PC-9 (cell line): ENCODE measurements at regions of chr4 and their contacts with region 1.

Region 1: DNA sequence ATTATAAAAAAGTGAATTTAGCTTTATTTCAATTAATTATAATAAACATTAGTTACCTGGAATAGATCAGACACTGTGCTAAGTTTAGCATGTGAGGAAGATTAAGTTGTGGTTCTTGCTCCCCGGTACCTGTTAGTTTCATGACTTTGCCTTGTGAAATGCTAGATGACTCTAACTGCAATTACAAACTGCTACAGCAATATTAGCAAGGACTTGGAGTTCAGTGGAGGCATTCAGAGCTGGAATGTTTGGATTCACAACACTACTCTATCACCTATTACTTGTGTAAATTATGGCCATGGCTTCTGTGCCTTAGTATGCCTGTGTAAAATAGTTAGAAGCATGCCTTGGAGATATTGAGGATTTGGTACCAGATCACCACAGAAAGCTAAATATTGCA is 21.4 kb upstream of the ANXA10 start:
- DNase-seq: no peak
- H3K4me3 ChIP-seq: no peak overlapping the region
- H3K27ac ChIP-seq: no peak overlapping the region
- H3K4me1 ChIP-seq: no peaks in the 10 kb centered on the region
- H3K27me3 ChIP-seq: no peaks in the 10 kb centered on the region
- CTCF ChIP-seq: no peak

Region 2: DNA sequence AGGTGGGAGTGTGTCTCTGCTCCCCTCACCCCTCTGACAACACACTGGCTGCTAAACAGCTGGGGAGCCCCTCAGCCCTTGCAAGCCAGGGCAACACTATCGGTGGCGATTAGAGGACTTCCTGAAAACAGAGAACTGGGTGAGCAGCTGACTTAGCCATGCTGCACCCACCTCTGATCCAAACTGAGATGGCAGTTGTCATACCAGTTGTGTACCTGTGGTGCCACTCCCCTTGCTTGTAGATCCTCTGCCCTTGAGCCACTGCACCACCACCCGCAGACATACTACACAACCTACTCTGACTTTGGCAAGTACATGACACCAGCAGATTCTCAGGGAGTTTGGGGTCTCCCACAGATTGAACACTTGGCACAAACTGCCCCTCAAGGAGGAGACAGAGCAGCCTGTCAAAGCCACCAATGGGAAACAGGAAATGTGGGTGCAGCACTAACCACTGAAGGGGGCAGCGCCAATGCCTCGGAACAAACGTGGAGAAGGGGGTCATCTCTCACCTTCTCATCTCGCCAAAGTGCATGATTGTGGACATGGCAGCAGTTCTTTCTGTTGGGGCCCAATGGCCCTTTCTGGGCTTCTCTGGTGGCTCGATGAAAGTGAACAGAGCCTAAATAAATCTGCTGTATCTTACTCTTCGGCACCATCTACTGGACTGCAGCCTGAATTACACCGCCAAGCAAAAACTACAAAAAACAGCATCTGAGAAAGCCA is 1421.7 kb after region 1 on chr4:
- CTCF ChIA-PET with region 1: no interaction called
- POLR2A ChIA-PET with region 1: no interaction called
- intact Hi-C with region 1: loop called (anchors 5 kb)
- DNase-seq: peak in 1 of 2 experiments; percentile 29
- H3K4me3 ChIP-seq: no peak overlapping the region
- H3K27ac ChIP-seq: no peak overlapping the region
- H3K4me1 ChIP-seq: no peaks in the 10 kb centered on the region
- H3K27me3 ChIP-seq: no peaks in the 10 kb centered on the region
- CTCF ChIP-seq: peak; percentile 83